ENCODE measurements at regions of chr9 and their contacts with region 1.

Region 1: GRCh38 chr9:94586814-94587213 is 6.8 kb downstream of the FBP2 start:
- DNase-seq: peak in 1 of 2 experiments; percentile 8
- H3K4me3 ChIP-seq: no peak overlapping the region
- H3K27ac ChIP-seq: no peak overlapping the region
- H3K4me1 ChIP-seq: no peaks in the 10 kb centered on the region
- H3K27me3 ChIP-seq: no peaks in the 10 kb centered on the region
- CTCF ChIP-seq: no peak

Region 2: GRCh38 chr9:94443032-94443722 is 143.6 kb before region 1 on chr9:
- CTCF ChIA-PET with region 1: no interaction called
- POLR2A ChIA-PET with region 1: no interaction called
- intact Hi-C with region 1: no loop called
- DNase-seq: no peak
- H3K4me3 ChIP-seq: no peak overlapping the region
- H3K27ac ChIP-seq: no peak overlapping the region
- H3K4me1 ChIP-seq: no peaks in the 10 kb centered on the region
- H3K27me3 ChIP-seq: no peaks in the 10 kb centered on the region
- CTCF ChIP-seq: no peak

Region 3: DNA sequence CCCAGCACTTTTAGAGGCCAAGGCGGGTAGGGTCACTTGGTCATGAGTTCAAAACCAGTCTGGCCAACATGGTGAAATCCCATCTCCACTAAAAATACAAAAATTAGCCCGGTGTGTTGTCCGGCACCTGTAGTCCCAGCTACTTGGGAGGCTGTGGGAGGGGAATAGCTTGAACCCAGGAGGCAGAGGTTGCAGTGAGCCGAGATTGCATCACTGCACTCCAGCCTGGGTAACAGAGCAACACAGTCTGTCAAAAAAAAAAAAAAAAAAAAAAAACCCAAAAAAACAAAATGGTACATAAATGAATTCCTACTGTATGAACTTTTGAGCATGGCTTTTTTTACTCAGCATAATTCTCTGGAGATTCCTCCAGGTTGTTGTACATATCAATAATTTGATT is 69.6 kb before region 1 on chr9:
- CTCF ChIA-PET with region 1: no interaction called
- POLR2A ChIA-PET with region 1: no interaction called
- intact Hi-C with region 1: no loop called
- DNase-seq: no peak
- H3K4me3 ChIP-seq: no peak overlapping the region
- H3K27ac ChIP-seq: no peak overlapping the region
- H3K4me1 ChIP-seq: peaks cover 1% of the 10 kb centered on the region
- H3K27me3 ChIP-seq: no peaks in the 10 kb centered on the region
- CTCF ChIP-seq: no peak

Region 4: GRCh38 chr9:94840738-94841137 is 253.9 kb after region 1 on chr9:
- CTCF ChIA-PET with region 1: no interaction called
- POLR2A ChIA-PET with region 1: interaction called, 16 read pairs
- intact Hi-C with region 1: no loop called
- DNase-seq: no peak
- H3K4me3 ChIP-seq: no peak overlapping the region
- H3K27ac ChIP-seq: no peak overlapping the region
- H3K4me1 ChIP-seq: no peaks in the 10 kb centered on the region
- H3K27me3 ChIP-seq: no peaks in the 10 kb centered on the region
- CTCF ChIP-seq: no peak

Region 5: DNA sequence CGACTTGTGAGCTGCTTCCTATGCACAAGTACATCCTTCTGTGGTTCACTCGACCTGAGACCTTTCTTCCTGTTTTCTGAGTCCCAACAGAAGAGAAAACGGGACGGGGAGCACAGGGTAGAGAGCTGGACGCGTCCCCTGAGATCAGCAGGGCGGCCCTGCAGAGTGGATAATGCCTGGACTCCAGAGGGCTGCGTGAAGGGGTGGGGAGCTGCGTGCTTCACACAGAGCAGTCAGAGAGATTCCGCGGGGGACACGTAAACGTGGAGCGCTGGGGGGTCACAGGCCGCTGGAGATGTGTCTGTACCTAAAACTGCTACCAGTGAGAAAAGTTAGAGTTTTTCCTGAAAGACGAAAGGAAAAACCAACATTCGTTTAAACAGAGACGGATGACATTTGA is 1668.9 kb after region 1 on chr9:
- CTCF ChIA-PET with region 1: no interaction called
- POLR2A ChIA-PET with region 1: interaction called, 10 read pairs
- intact Hi-C with region 1: no loop called
- DNase-seq: no peak
- H3K4me3 ChIP-seq: no peak overlapping the region
- H3K27ac ChIP-seq: no peak overlapping the region
- H3K4me1 ChIP-seq: no peaks in the 10 kb centered on the region
- H3K27me3 ChIP-seq: no peaks in the 10 kb centered on the region
- CTCF ChIP-seq: no peak

Measured in PC-9 (cell line).